ENCODE measurements at regions of chr6 and their contacts with region 1.

Region 1: GRCh38 chr6:44074439-44075136 is 52.7 kb downstream of the MRPL14 start:
- DNase-seq: peak; percentile 96
- H3K4me3 ChIP-seq: no peak overlapping the region
- H3K27ac ChIP-seq: peak overlapping the region; percentile 82 to 92 (median 86)
- H3K4me1 ChIP-seq: peaks cover 36 to 69% (median 60%) of the 10 kb centered on the region in 4 donors
- H3K27me3 ChIP-seq: peaks cover 0 to 3% (median 0%) of the 10 kb centered on the region in 4 donors
- CTCF ChIP-seq: peak; percentile 89 to 93 (median 91)
- EP300 ChIP-seq: no peak
- POLR2A ChIP-seq: no peak

Region 2: GRCh38 chr6:43667245-43668150 is 407.1 kb before region 1 on chr6:
- intact Hi-C with region 1: loop called (anchors 2 kb)
- DNase-seq: peak; percentile 96
- H3K4me3 ChIP-seq: peak overlapping the region in 2 of 4 donors; percentile 20 to 25
- H3K27ac ChIP-seq: no peak overlapping the region
- H3K4me1 ChIP-seq: peaks cover 32 to 50% (median 45%) of the 10 kb centered on the region in 4 donors
- H3K27me3 ChIP-seq: no peaks in the 10 kb centered on the region
- CTCF ChIP-seq: peak; percentile 93 to 98 (median 96)
- EP300 ChIP-seq: no peak
- POLR2A ChIP-seq: no peak

Region 3: GRCh38 chr6:43714311-43715055 is 360.1 kb before region 1 on chr6:
- intact Hi-C with region 1: no loop called
- DNase-seq: no peak
- H3K4me3 ChIP-seq: no peak overlapping the region
- H3K27ac ChIP-seq: peak overlapping the region in 1 of 4 donors; percentile 60
- H3K4me1 ChIP-seq: peaks cover 19 to 30% (median 28%) of the 10 kb centered on the region in 4 donors
- H3K27me3 ChIP-seq: no peaks in the 10 kb centered on the region
- CTCF ChIP-seq: no peak
- EP300 ChIP-seq: no peak
- POLR2A ChIP-seq: no peak

Region 4: GRCh38 chr6:43769526-43770416 is 304.8 kb before region 1 on chr6 and contains the start of gene VEGFA:
- intact Hi-C with region 1: loop called (anchors 1 kb)
- DNase-seq: peak; percentile 96
- H3K4me3 ChIP-seq: peak within 1 kb of the TSS; percentile 73 to 83 (median 82)
- H3K27ac ChIP-seq: peak within 1 kb of the TSS; percentile 97 to 99 (median 97)
- H3K4me1 ChIP-seq: peaks cover 28 to 48% (median 47%) of the 10 kb centered on the region in 4 donors
- H3K27me3 ChIP-seq: no peaks in the 10 kb centered on the region
- CTCF ChIP-seq: peak in 2 of 3 experiments; percentile 98 to 99
- EP300 ChIP-seq: no peak
- POLR2A ChIP-seq: peak; percentile 58
- total RNA-seq, gene VEGFA: 39.2 to 58.5 (median 45.0) TPM

Region 5: DNA sequence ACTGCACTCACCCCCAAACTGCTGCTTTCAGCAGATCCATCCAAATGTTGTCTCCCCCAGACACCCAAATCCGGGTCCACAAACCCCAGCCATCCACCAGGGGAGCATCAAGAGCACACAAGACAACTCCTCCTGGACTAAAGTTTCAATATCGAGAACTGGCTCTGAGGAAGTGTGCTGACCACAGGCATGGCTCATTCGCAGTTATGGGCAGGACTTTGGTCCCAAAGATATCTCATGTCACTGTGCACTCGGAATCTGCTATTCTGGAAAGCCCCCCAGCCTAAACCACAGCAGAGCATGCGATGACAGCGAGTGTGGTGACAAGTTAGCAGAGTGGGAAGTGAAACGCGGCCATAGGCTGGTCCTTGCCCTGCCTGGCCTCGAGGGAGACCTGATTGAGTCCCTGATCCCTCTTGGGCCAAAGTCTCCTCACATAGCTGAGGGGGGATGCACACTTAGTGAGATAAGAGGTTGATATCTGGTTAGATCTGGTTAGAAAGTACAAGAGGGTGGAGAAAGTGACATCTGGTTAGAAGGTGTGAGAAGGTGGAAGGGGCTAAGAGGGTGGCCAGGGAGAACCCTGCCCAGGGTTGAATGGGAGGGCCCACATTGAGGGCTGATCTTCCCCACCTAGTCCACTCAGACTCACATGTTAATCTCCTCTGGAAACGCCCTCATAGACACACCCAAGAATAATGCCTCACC is 97.0 kb before region 1 on chr6:
- intact Hi-C with region 1: loop called (anchors 2 kb)
- DNase-seq: no peak
- H3K4me3 ChIP-seq: no peak overlapping the region
- H3K27ac ChIP-seq: no peak overlapping the region
- H3K4me1 ChIP-seq: peaks cover 11 to 25% (median 23%) of the 10 kb centered on the region in 4 donors
- H3K27me3 ChIP-seq: no peaks in the 10 kb centered on the region
- CTCF ChIP-seq: no peak
- EP300 ChIP-seq: no peak
- POLR2A ChIP-seq: no peak

Region 6: DNA sequence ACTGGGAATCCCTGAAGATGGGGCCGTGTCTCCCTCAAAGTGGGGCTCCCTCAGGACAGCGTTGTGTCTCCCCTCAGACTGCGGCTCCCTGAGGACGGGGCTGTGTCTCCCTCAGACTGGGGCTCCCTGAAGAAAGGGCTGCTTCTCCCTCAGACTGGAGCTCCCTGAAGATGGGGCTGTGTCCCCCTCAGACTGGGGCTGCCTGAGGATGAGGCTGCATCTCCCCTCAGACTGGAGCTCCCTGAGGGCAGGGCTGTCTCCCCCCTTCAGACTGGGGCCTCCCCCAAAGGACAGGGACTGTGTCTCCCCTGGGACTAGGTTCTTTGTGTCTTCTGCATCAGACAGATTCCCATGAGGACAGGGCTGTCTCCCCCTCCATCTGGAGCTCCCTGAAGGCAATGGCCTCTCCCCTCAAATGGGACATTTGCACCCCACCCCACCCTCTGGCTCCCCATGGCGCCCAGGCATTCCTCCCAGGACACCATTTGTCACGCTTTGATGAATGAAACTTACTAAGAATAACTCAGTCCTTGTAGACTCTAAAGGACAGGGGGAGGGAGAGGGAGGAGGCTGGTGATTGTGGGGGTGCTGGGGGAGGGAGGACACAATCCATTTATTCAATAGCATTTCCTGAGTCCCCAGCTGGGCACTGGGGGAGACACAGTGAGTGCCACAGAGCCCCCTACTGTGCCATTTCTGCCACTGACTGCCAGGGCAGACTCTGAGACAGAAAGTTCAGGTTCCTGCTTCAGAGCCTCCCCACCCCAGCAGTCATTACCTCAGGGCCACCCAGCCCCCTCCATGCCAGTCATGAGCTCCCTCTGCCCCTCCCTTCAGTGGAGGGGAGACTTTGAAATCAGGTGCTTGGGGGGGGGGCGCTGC is 69.7 kb before region 1 on chr6:
- intact Hi-C with region 1: loop called (anchors 5 kb)
- DNase-seq: no peak
- H3K4me3 ChIP-seq: no peak overlapping the region
- H3K27ac ChIP-seq: peak overlapping the region in 3 of 4 donors; percentile 22 to 75 (median 69)
- H3K4me1 ChIP-seq: peaks cover 29 to 57% (median 50%) of the 10 kb centered on the region in 4 donors
- H3K27me3 ChIP-seq: peaks cover 0 to 35% (median 0%) of the 10 kb centered on the region in 4 donors
- CTCF ChIP-seq: peak in 2 of 3 experiments; percentile 26 to 38
- EP300 ChIP-seq: no peak
- POLR2A ChIP-seq: no peak